ENCODE measurements at regions of chr5 and their contacts with region 1.

Region 1: DNA sequence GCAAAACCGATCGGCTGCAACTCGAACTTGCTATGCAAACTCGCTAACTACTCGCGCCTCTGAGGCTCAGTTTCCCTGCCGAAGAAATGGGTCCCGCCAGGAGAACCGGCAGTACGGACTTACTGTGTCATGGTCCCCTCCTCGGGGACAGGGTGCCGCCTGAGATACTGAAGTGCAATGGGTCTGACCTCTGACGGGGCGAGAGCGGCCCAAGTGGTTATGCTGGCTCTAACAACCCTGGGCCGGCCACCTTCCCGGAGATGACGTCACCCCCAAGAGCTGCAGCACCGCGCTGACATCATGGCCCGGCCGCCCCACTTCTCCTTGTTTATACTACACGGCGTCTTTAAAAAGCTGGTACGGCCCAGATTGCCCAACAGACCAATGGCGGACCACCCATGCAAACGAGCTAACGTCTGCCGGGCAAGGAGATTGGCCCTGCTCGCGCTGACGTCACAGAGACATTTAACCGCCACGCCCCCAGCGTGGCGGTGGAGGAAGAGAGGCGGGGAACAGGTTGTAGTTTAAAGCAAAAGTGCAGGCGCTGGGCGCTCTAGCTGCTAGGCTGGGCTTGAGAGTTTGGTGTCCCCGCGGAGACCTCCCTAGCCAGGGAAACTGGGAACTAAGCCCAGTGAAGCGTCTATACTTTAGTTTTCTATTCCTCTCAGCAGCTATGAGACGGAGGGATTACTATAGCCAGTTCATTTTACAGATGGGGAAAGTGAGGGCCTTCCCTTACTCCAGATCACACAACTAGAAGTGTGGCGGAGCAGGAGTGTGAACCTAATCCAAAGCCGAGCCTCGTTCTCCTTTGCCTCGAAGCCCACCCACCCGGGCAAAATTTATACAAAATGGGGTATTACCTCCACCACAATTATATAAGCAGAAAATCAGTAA is 654 bp upstream of the RNF44 start:
- DNase-seq: peak; percentile 99
- ATAC-seq: peak; percentile 75
- H3K4me3 Mint-ChIP-seq: peak overlapping the region; percentile 97
- H3K27ac Mint-ChIP-seq: peak overlapping the region; percentile 97
- H3K4me1 Mint-ChIP-seq: peaks cover 66% of the 10 kb centered on the region
- H3K27me3 Mint-ChIP-seq: no peaks in the 10 kb centered on the region

Region 2: DNA sequence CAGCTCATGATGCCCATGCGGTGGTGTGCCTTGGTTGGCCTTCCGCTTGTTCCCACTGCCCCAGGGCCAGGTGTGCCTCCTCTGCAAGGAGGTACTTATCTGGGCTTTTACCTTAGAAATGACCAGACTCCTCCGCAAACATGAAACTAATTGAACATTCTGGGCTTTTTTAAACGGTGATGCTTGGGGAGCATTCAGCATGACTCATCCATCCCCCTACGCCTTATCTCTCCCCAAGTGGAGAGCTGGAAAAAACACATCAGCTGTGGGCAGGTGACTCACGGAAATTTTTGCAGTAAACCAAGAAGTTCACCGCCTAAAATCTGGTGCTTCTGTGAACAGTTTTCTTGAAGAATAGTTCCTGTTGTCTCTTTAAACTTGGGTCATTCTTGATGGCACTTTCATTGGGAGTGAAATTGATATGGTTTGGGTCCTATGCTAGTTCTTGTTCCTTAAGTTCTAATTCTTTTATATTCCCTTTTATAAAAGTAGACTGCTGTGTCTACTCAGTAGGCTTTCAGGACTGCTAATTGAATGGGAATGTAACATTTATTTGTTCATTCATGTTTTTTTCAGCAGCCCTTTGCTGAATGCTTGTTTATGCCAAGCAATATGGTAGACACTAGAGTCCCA is 1019.9 kb before region 1 on chr5:
- CTCF ChIA-PET with region 1: no interaction called
- POLR2A ChIA-PET with region 1: no interaction called
- intact Hi-C with region 1: loop called in 1 of 2 experiments (anchors 5 kb)
- DNase-seq: peak; percentile 92
- ATAC-seq: peak; percentile 55
- H3K4me3 Mint-ChIP-seq: peak overlapping the region; percentile 54
- H3K27ac Mint-ChIP-seq: peak overlapping the region; percentile 98
- H3K4me1 Mint-ChIP-seq: peaks cover 95% of the 10 kb centered on the region
- H3K27me3 Mint-ChIP-seq: no peaks in the 10 kb centered on the region

Region 3: DNA sequence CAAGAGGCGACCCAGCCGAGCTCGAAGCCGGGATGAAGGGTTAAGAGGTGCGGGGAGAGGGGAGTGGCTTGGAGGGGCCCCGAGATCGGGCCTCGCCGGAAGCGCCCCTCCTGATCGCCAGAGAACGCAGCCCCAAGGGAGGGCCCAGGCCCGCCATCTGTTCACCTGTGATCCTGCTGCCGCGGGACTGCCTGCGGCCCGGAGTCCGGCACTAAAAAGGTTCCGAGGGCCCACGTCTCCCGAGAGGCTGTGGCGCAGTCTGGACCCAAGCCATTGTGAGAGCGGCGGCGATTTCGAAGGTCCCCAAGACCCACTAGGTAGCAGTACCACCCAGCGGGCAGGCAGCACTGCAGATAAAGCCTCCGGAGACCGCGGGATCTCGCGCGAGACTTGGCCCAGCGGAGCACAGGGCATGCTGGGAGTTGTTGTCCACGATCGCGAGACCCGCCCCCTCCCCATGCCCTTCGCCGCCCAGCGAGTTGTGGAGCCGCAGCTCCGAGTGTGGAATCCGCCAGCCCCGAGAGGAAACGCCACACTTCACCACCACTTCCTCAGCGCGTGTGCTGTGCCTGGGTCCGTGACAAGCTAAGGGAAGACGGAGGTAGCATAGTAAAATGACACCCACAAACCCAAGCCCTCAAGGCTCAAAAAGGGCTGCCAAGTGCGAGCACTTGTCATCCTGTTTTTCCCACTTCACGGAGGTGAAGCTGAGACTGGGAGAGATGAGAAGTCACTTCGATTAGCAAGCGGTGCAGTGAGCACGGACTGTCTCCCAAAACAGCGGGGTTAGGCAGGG is 176.2 kb before region 1 on chr5 and contains the start of gene KIAA1191:
- CTCF ChIA-PET with region 1: no interaction called
- POLR2A ChIA-PET with region 1: no interaction called
- intact Hi-C with region 1: loop called (anchors 2 kb)
- DNase-seq: peak; percentile 97
- ATAC-seq: peak; percentile 91
- H3K4me3 Mint-ChIP-seq: peak within 1 kb of the TSS; percentile 95
- H3K27ac Mint-ChIP-seq: peak within 1 kb of the TSS; percentile 94
- H3K4me1 Mint-ChIP-seq: peaks cover 32% of the 10 kb centered on the region
- H3K27me3 Mint-ChIP-seq: no peaks in the 10 kb centered on the region
- total RNA-seq, gene KIAA1191: 42.2 to 52.6 TPM

Region 4: GRCh38 chr5:176415952-176416924 is 121.6 kb before region 1 on chr5 and contains the start of gene CLTB:
- CTCF ChIA-PET with region 1: interaction called, 4 read pairs
- POLR2A ChIA-PET with region 1: interaction called, 3 read pairs
- intact Hi-C with region 1: loop called (anchors 1 to 10 kb)
- DNase-seq: peak; percentile 94
- ATAC-seq: peak; percentile 96
- H3K4me3 Mint-ChIP-seq: peak within 1 kb of the TSS; percentile 74
- H3K27ac Mint-ChIP-seq: peak within 1 kb of the TSS; percentile 76
- H3K4me1 Mint-ChIP-seq: peaks cover 36% of the 10 kb centered on the region
- H3K27me3 Mint-ChIP-seq: no peaks in the 10 kb centered on the region
- total RNA-seq, gene CLTB: 39.3 to 47.8 TPM

Region 5: DNA sequence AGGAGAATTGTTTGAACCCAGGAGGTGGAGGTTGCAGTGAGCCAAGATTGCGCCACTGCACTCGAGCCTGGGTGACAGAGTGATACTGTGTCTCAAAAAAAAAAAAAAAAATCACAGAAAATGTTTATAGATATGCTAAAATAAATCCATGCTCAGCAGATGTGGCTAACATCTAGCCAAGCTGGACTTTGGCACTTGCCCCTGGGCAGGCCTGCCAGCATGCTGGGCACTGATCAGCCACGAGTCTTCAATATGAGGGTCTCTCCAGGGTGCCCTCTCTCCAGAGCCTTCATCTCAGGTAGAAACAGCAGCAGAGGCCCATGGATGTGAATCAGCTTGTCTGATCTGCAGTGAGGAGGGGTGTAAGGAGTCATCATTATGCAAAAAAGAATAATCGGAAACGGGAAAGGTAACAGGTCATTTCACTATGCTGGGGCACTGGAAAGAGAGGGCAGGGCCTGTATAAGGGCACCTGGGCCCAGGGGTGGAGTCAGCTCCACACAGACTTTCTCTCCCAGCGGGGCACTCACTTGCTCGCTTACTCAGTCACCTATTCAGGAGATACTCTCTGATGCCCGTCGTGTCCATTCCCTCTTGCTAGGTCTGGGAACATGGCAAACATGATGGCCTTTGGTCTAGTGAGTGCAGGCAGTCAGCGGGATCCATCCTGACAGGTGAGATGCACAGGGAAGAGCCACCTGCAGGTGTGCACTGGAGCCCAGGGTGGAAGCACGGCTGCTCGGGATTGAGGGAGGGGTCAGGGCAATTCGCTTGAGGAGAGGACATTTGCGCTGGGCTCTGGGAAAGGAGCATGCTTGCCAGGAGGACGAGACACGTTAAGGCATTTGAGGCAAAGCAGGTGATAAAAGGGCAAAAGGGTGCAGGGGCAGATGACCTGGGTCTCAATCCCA is 17.8 kb before region 1 on chr5:
- CTCF ChIA-PET with region 1: no interaction called
- POLR2A ChIA-PET with region 1: no interaction called
- intact Hi-C with region 1: no loop called
- DNase-seq: no peak
- ATAC-seq: no peak
- H3K4me3 Mint-ChIP-seq: no peak overlapping the region
- H3K27ac Mint-ChIP-seq: no peak overlapping the region
- H3K4me1 Mint-ChIP-seq: peaks cover 18% of the 10 kb centered on the region
- H3K27me3 Mint-ChIP-seq: no peaks in the 10 kb centered on the region

Region 6: GRCh38 chr5:177006265-177006972 is 468.6 kb after region 1 on chr5 and contains the start of gene UIMC1:
- CTCF ChIA-PET with region 1: no interaction called
- POLR2A ChIA-PET with region 1: no interaction called
- intact Hi-C with region 1: loop called (anchors 1 to 2 kb)
- DNase-seq: peak; percentile 96
- ATAC-seq: peak; percentile 90
- H3K4me3 Mint-ChIP-seq: peak within 1 kb of the TSS; percentile 87
- H3K27ac Mint-ChIP-seq: peak within 1 kb of the TSS; percentile 96
- H3K4me1 Mint-ChIP-seq: peaks cover 26% of the 10 kb centered on the region
- H3K27me3 Mint-ChIP-seq: no peaks in the 10 kb centered on the region
- total RNA-seq, gene UIMC1: 50.4 to 53.4 TPM

Region 7: DNA sequence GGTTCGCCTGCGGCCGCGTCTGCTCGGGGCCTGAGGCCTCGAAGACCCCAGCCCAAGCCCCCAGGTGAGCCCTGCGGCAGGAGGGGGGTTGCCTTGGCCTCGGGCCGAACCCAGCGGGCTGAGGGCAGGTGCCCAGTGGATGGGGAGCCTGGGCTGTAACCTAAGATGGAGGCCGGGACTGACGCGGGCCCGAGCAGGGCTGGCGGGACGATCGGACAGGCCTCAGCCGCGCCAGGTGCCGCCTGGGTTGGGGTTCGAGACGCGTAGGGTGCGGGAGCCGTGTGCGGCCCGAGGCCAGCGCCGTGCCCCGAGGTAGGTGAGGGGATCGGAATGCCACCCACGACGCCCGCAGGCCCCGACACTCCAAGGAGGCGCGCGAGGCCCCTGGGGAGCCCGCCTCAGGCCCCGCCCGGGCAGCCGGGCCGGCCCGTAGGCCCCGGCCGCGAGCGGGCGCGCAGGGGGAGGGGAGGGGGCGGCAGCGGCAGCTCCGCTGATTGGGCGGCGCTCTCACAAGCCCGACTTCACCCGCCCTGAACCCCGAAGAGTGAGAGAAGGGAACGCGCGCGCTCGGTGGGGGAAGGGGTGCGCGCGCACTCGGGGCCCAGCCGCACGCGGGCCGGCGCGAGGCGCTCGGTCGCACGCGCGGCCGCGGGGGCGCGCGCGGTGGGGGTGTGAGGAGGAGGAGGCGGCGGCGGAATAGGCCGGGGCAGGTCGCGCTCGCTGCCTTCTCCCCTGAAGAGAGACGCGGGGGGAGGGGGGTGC is 595.4 kb after region 1 on chr5 and contains the start of gene NSD1:
- CTCF ChIA-PET with region 1: no interaction called
- POLR2A ChIA-PET with region 1: no interaction called
- intact Hi-C with region 1: loop called in 1 of 2 experiments (anchors 1 kb)
- DNase-seq: peak; percentile 95
- ATAC-seq: peak; percentile 81
- H3K4me3 Mint-ChIP-seq: peak within 1 kb of the TSS; percentile 91
- H3K27ac Mint-ChIP-seq: peak within 1 kb of the TSS; percentile 89
- H3K4me1 Mint-ChIP-seq: peaks cover 48% of the 10 kb centered on the region
- H3K27me3 Mint-ChIP-seq: no peaks in the 10 kb centered on the region
- total RNA-seq, gene NSD1: 65.6 to 68.2 TPM

Region 8: GRCh38 chr5:177351385-177352329 is 813.8 kb after region 1 on chr5 and contains the start of gene LMAN2:
- CTCF ChIA-PET with region 1: no interaction called
- POLR2A ChIA-PET with region 1: no interaction called
- intact Hi-C with region 1: loop called in 1 of 2 experiments (anchors 5 kb)
- DNase-seq: peak; percentile 95
- ATAC-seq: peak; percentile 99
- H3K4me3 Mint-ChIP-seq: peak within 1 kb of the TSS; percentile 89
- H3K27ac Mint-ChIP-seq: peak within 1 kb of the TSS; percentile 99
- H3K4me1 Mint-ChIP-seq: peaks cover 48% of the 10 kb centered on the region
- H3K27me3 Mint-ChIP-seq: no peaks in the 10 kb centered on the region
- total RNA-seq, gene LMAN2: 74.5 to 92.1 TPM

Measured in activated CD4-positive, alpha-beta T cell treated with anti-CD3 and anti-CD28 coated beads for 36 hours (primary cell).